ENCODE measurements at regions of chr5 and their contacts with region 1.

Region 1: GRCh38 chr5:142145106-142145900 is 36.7 kb downstream of the NDFIP1 start:
- DNase-seq: peak; percentile 74
- H3K4me3 ChIP-seq: no peak overlapping the region
- H3K27ac ChIP-seq: no peak overlapping the region
- H3K4me1 ChIP-seq: no peaks in the 10 kb centered on the region
- H3K27me3 ChIP-seq: no peaks in the 10 kb centered on the region
- CTCF ChIP-seq: peak; percentile 71

Region 2: GRCh38 chr5:141664732-141665461 is 480.4 kb before region 1 on chr5:
- intact Hi-C with region 1: loop called (anchors 10 kb)
- DNase-seq: peak; percentile 84
- H3K4me3 ChIP-seq: no peak overlapping the region
- H3K27ac ChIP-seq: no peak overlapping the region
- H3K4me1 ChIP-seq: no peaks in the 10 kb centered on the region
- H3K27me3 ChIP-seq: no peaks in the 10 kb centered on the region
- CTCF ChIP-seq: peak; percentile 91

Region 3: DNA sequence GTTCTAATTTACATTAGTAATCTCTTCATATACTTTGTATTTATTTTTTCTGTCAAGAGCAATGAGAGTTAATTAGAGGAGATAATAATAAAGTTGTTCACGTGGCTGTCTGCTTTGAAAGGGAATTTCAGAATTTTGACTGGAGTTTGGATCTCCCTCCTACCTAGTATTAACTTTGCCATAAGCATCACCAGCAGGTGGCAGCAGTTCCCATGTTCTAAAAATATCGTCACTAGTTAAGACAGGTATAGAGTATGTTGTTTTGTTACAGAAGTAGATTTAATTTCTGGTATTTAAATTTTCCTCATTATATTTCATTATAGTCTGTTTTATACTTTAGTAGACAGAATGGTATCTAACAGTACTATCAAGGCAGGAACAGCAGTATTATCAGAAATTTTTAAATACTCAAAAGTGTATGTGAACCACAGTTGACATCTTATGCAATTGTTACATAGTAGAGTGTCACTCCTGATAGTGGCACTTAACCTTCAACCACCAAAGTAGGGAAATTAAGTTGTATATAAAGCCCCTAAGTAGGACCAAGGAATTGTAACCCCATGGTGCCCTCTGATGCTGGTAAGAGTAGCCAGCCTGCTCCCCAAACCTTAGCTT is 152.8 kb before region 1 on chr5:
- intact Hi-C with region 1: loop called (anchors 5 kb)
- DNase-seq: peak; percentile 79
- H3K4me3 ChIP-seq: no peak overlapping the region
- H3K27ac ChIP-seq: no peak overlapping the region
- H3K4me1 ChIP-seq: no peaks in the 10 kb centered on the region
- H3K27me3 ChIP-seq: no peaks in the 10 kb centered on the region
- CTCF ChIP-seq: peak; percentile 66

Region 4: DNA sequence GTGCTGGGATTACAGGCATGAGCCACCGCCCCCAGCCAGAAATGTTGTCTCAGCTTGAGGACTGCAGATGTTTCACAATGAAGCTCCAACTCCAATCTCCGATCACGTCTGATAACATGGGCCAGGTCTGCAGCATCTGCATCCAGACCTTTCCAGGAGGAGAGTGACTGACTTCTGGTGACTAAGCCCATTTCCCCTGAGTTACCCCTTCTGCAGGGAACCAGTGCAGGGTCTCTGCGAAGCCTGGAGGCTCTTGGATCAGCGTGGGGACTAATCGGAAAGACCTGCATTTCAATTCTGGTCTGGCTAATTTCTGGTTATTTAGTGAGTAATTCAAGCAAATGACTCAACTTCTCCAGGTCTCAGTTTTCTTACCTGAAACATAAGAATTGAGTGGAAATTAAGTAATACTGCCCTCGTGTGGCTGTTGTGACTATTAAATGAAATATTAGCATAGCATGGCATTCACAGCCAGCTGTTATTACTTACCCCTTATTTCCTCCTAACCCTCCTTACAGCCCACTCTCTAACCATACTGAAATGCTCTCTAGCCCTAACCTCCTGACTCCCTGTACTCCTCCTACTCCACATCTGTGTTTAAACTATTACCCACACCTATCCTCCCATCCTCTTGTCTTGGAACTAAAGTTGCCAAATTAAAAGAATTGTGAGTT is 130.3 kb before region 1 on chr5:
- intact Hi-C with region 1: loop called (anchors 5 kb)
- DNase-seq: peak; percentile 39
- H3K4me3 ChIP-seq: no peak overlapping the region
- H3K27ac ChIP-seq: peak overlapping the region; percentile 26
- H3K4me1 ChIP-seq: no peaks in the 10 kb centered on the region
- H3K27me3 ChIP-seq: no peaks in the 10 kb centered on the region
- CTCF ChIP-seq: peak; percentile 38

Region 5: DNA sequence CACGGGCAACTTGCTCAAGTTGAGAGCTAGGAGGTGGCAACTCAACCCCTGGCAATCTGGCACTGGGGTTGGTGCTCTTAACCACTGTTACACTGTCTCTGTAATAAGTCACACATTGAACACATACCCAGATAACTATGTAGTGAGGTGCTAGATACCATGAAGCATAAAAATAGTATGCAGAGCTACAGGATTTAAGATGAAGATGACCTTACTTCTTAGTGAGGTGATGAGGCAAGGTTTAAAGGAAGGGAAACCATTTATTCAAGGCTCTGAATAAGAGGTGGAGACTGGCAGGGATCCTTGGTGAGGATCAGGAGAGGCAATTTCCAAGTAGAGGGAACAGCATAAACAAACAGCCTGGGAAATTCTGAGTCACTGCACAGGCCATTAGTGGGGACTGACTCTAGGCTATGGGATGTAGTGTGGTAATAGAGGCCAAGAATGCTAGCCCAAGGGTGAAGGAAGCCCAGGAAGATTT is 1325.8 kb after region 1 on chr5:
- intact Hi-C with region 1: no loop called
- DNase-seq: no peak
- H3K4me3 ChIP-seq: no peak overlapping the region
- H3K27ac ChIP-seq: no peak overlapping the region
- H3K4me1 ChIP-seq: no peaks in the 10 kb centered on the region
- H3K27me3 ChIP-seq: no peaks in the 10 kb centered on the region
- CTCF ChIP-seq: no peak

Measured in colonic mucosa (tissue), 4 donors.